CD4-positive, alpha-beta memory T cell (primary cell): ENCODE measurements at regions of chr12 and their contacts with region 1.

Region 1: GRCh38 chr12:54398995-54399793 is 14.7 kb upstream of the ZNF385A start:
- DNase-seq: peak; percentile 82 to 88 (median 85)
- H3K4me3 ChIP-seq: no peak overlapping the region
- H3K4me3 Mint-ChIP-seq: no peak overlapping the region
- H3K27ac ChIP-seq: no peak overlapping the region
- H3K27ac Mint-ChIP-seq: peak overlapping the region in 5 of 7 donors; percentile 65 to 79 (median 76)
- H3K4me1 ChIP-seq: peaks cover 9% of the 10 kb centered on the region
- H3K4me1 Mint-ChIP-seq: peaks cover 7 to 31% (median 14%) of the 10 kb centered on the region in 4 donors
- H3K27me3 ChIP-seq: no peaks in the 10 kb centered on the region
- H3K27me3 Mint-ChIP-seq: no peaks in the 10 kb centered on the region

Region 2: GRCh38 chr12:54419088-54419892 is 20.1 kb after region 1 on chr12 and contains the start of gene ITGA5:
- CTCF ChIA-PET with region 1: interaction called, 938 read pairs
- POLR2A ChIA-PET with region 1: interaction called, 213 read pairs
- intact Hi-C with region 1: loop called (anchors 1 kb)
- DNase-seq: peak in 3 of 5 donors; percentile 23 to 57 (median 27)
- H3K4me3 ChIP-seq: peak within 1 kb of the TSS; percentile 55 to 81
- H3K4me3 Mint-ChIP-seq: peak within 1 kb of the TSS; percentile 96 to 98 (median 98)
- H3K27ac ChIP-seq: peak within 1 kb of the TSS; percentile 91
- H3K27ac Mint-ChIP-seq: peak within 1 kb of the TSS; percentile 90 to 99 (median 98)
- H3K4me1 ChIP-seq: peaks cover 46% of the 10 kb centered on the region
- H3K4me1 Mint-ChIP-seq: peaks cover 34 to 73% (median 39%) of the 10 kb centered on the region in 4 donors
- H3K27me3 ChIP-seq: no peaks in the 10 kb centered on the region
- H3K27me3 Mint-ChIP-seq: peaks cover 0 to 1% of the 10 kb centered on the region in 2 donors
- total RNA-seq, gene ITGA5: 158 to 162 TPM

Region 3: GRCh38 chr12:54439521-54440255 is 40.5 kb after region 1 on chr12:
- CTCF ChIA-PET with region 1: interaction called, 938 read pairs
- POLR2A ChIA-PET with region 1: interaction called, 99 read pairs
- intact Hi-C with region 1: loop called (anchors 1 kb)
- DNase-seq: peak in 4 of 5 donors; percentile 57 to 66 (median 64)
- H3K4me3 ChIP-seq: no peak overlapping the region
- H3K4me3 Mint-ChIP-seq: no peak overlapping the region
- H3K27ac ChIP-seq: no peak overlapping the region
- H3K27ac Mint-ChIP-seq: peak overlapping the region in 6 of 7 donors; percentile 2 to 82 (median 42)
- H3K4me1 ChIP-seq: no peaks in the 10 kb centered on the region
- H3K4me1 Mint-ChIP-seq: peaks cover 3 to 6% (median 4%) of the 10 kb centered on the region in 4 donors
- H3K27me3 ChIP-seq: no peaks in the 10 kb centered on the region
- H3K27me3 Mint-ChIP-seq: peaks cover 0 to 2% of the 10 kb centered on the region in 2 donors

Region 4: DNA sequence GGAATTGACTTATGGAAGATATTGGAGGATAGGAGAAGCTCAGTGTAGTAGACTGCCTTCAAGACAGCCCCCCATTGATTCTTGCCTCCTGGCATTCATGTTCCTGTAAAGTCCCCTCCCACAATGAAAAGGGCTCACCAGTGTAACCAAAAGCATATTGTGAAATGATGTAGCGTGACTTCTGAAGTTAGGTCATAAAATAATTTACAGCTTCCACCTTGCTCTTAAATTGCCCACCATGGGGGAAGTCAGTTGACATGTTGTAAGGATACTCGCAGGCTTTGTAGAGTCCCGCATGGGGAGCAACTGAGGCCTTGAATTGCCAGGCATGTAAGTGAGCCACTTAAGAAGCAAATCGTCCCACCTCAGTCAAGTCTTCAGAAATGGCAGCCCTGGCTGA is 49.1 kb after region 1 on chr12:
- CTCF ChIA-PET with region 1: interaction called, 938 read pairs
- POLR2A ChIA-PET with region 1: interaction called, 5 read pairs
- intact Hi-C with region 1: no loop called
- DNase-seq: no peak
- H3K4me3 ChIP-seq: no peak overlapping the region
- H3K4me3 Mint-ChIP-seq: no peak overlapping the region
- H3K27ac ChIP-seq: no peak overlapping the region
- H3K27ac Mint-ChIP-seq: no peak overlapping the region
- H3K4me1 ChIP-seq: no peaks in the 10 kb centered on the region
- H3K4me1 Mint-ChIP-seq: no peaks in the 10 kb centered on the region
- H3K27me3 ChIP-seq: no peaks in the 10 kb centered on the region
- H3K27me3 Mint-ChIP-seq: no peaks in the 10 kb centered on the region

Region 5: DNA sequence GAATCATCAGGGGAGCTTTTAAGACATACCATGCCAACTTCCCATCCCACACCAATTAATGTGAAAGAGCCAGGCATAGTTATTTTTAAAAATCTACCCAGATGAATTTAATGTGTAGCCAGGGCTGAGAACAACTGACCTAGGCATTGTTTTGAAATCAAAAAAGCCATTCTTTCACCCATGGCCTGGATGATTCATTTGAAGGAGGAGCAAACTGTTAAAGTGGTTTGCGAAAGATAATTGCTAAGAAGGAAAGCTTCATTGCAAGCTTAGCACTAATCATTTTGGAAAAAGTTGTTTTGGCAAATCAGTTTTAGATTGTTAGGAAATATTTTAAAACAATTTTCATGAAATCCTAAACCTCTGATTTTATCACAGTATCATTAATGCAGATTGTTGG is 76.3 kb after region 1 on chr12:
- CTCF ChIA-PET with region 1: interaction called, 10 read pairs
- POLR2A ChIA-PET with region 1: no interaction called
- intact Hi-C with region 1: no loop called
- DNase-seq: no peak
- H3K4me3 ChIP-seq: no peak overlapping the region
- H3K4me3 Mint-ChIP-seq: no peak overlapping the region
- H3K27ac ChIP-seq: no peak overlapping the region
- H3K27ac Mint-ChIP-seq: no peak overlapping the region
- H3K4me1 ChIP-seq: no peaks in the 10 kb centered on the region
- H3K4me1 Mint-ChIP-seq: no peaks in the 10 kb centered on the region
- H3K27me3 ChIP-seq: no peaks in the 10 kb centered on the region
- H3K27me3 Mint-ChIP-seq: peaks cover 7 to 10% of the 10 kb centered on the region in 2 donors

Region 6: DNA sequence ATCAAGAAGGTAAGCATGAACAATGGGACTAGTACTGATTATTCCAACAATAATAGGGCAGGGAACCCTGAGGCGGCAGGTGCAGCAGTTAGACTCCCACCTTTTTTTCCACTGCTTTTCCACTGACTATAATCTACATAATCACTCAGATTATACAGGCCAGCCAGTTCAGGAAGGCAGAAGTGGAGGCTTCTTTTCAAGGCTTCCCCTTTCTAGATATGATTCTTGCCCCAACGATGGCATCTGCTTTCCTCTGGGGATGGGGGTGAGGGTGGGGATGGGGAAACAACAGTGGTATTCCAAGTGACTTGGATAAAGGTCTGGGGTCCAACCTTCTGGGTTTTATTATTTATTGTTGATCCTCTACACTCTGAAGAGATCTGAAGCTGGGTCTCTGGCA is 98.7 kb after region 1 on chr12:
- CTCF ChIA-PET with region 1: interaction called, 28 read pairs
- POLR2A ChIA-PET with region 1: interaction called, 9 read pairs
- intact Hi-C with region 1: loop called (anchors 5 kb)
- DNase-seq: no peak
- H3K4me3 ChIP-seq: peak overlapping the region; percentile 74 to 78
- H3K4me3 Mint-ChIP-seq: peak overlapping the region; percentile 94 to 100 (median 99)
- H3K27ac ChIP-seq: peak overlapping the region; percentile 78
- H3K27ac Mint-ChIP-seq: peak overlapping the region; percentile 88 to 99 (median 98)
- H3K4me1 ChIP-seq: peaks cover 40% of the 10 kb centered on the region
- H3K4me1 Mint-ChIP-seq: peaks cover 33 to 56% (median 37%) of the 10 kb centered on the region in 4 donors
- H3K27me3 ChIP-seq: no peaks in the 10 kb centered on the region
- H3K27me3 Mint-ChIP-seq: no peaks in the 10 kb centered on the region